ENCODE measurements at regions of chr21 and their contacts with region 1.

Region 1: GRCh38 chr21:33608559-33608958 is 20.1 kb upstream of the DONSON start:
- DNase-seq: no peak
- H3K4me3 ChIP-seq: no peak overlapping the region
- CTCF ChIP-seq: no peak

Region 2: GRCh38 chr21:33412832-33413519 is 195.6 kb before region 1 on chr21:
- CTCF ChIA-PET with region 1: no interaction called
- POLR2A ChIA-PET with region 1: no interaction called
- DNase-seq: no peak
- H3K4me3 ChIP-seq: no peak overlapping the region
- CTCF ChIP-seq: no peak

Region 3: GRCh38 chr21:33552093-33552998 is 56.2 kb before region 1 on chr21:
- CTCF ChIA-PET with region 1: no interaction called
- POLR2A ChIA-PET with region 1: no interaction called
- DNase-seq: no peak
- H3K4me3 ChIP-seq: no peak overlapping the region
- CTCF ChIP-seq: no peak

Region 4: GRCh38 chr21:33566514-33566913 is 42.0 kb before region 1 on chr21:
- CTCF ChIA-PET with region 1: interaction called, 21 read pairs
- POLR2A ChIA-PET with region 1: no interaction called
- DNase-seq: no peak
- H3K4me3 ChIP-seq: no peak overlapping the region
- CTCF ChIP-seq: no peak

Region 5: GRCh38 chr21:33578959-33579542 is 29.5 kb before region 1 on chr21:
- CTCF ChIA-PET with region 1: interaction called, 23 read pairs
- POLR2A ChIA-PET with region 1: no interaction called
- DNase-seq: no peak
- H3K4me3 ChIP-seq: no peak overlapping the region
- CTCF ChIP-seq: no peak

Region 6: DNA sequence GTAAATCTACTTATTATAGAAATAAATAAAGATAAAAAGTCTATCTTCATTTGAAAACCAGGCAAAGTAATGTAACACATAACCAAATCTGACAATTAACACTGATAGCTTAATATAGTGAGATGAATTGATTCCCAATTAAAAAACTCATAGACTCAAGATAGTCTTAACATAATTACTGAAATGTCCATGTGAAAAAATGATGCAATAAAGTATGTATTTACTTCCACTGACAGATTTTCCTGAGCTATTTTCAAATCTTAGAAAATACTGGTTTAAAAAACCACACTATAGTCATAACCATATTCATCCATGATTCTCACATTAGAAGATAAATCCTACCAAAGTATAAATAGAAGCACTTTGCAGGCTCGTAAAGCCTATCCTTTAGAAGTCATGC is 10.5 kb before region 1 on chr21:
- CTCF ChIA-PET with region 1: interaction called, 72 read pairs
- POLR2A ChIA-PET with region 1: no interaction called
- DNase-seq: no peak
- H3K4me3 ChIP-seq: no peak overlapping the region
- CTCF ChIP-seq: no peak

Region 7: DNA sequence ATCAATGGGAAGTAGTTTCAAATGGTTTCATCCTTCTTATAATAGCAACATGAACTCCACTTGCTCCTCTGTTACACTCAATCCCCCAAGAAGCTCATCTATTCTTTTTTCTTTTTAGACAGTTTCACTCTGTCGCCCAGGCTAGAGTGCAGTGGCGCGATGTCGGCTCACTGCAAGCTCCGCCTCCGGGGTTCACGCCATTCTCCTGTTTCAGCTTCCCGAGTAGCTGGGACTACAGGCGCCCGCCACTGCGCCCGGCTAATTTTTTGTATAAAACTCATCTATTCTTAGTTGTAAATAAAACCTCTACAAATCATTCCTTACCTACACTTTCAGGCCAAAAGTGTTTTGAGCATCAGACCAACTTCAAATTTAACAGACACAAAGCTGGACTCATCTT is 28.2 kb after region 1 on chr21:
- CTCF ChIA-PET with region 1: interaction called, 14 read pairs
- POLR2A ChIA-PET with region 1: no interaction called
- DNase-seq: no peak
- H3K4me3 ChIP-seq: no peak overlapping the region
- CTCF ChIP-seq: no peak

Region 8: GRCh38 chr21:33894736-33895288 is 286.3 kb after region 1 on chr21:
- CTCF ChIA-PET with region 1: interaction called, 21 read pairs
- POLR2A ChIA-PET with region 1: no interaction called
- DNase-seq: peak; percentile 41
- H3K4me3 ChIP-seq: peak overlapping the region; percentile 43
- CTCF ChIP-seq: peak; percentile 92

Measured in AG04449 (cell line).